Caco-2 (cell line): ENCODE measurements at regions of chr14 and their contacts with region 1.

Region 1: GRCh38 chr14:39491134-39491571 is 58.9 kb upstream of the FBXO33 start:
- DNase-seq: peak in 1 of 2 experiments; percentile 43
- H3K4me3 ChIP-seq: no peak overlapping the region
- H3K4me3 Mint-ChIP-seq: no peak overlapping the region
- H3K27ac Mint-ChIP-seq: peak overlapping the region; percentile 55
- H3K4me1 ChIP-seq: peaks cover 9% of the 10 kb centered on the region; the same call in 1 of the 2 replicates
- H3K4me1 Mint-ChIP-seq: peaks cover 11% of the 10 kb centered on the region
- H3K27me3 ChIP-seq: no peaks in the 10 kb centered on the region
- H3K27me3 Mint-ChIP-seq: no peaks in the 10 kb centered on the region
- CTCF ChIP-seq: peak; percentile 22 to 36

Region 2: GRCh38 chr14:39581474-39581873 is 90.3 kb after region 1 on chr14:
- CTCF ChIA-PET with region 1: no interaction called
- POLR2A ChIA-PET with region 1: no interaction called
- intact Hi-C with region 1: loop called (anchors 5 kb)
- DNase-seq: no peak
- H3K4me3 ChIP-seq: no peak overlapping the region
- H3K4me3 Mint-ChIP-seq: no peak overlapping the region
- H3K27ac Mint-ChIP-seq: no peak overlapping the region
- H3K4me1 ChIP-seq: no peaks in the 10 kb centered on the region
- H3K4me1 Mint-ChIP-seq: no peaks in the 10 kb centered on the region
- H3K27me3 ChIP-seq: no peaks in the 10 kb centered on the region
- H3K27me3 Mint-ChIP-seq: peaks cover 3% of the 10 kb centered on the region
- CTCF ChIP-seq: no peak

Region 3: DNA sequence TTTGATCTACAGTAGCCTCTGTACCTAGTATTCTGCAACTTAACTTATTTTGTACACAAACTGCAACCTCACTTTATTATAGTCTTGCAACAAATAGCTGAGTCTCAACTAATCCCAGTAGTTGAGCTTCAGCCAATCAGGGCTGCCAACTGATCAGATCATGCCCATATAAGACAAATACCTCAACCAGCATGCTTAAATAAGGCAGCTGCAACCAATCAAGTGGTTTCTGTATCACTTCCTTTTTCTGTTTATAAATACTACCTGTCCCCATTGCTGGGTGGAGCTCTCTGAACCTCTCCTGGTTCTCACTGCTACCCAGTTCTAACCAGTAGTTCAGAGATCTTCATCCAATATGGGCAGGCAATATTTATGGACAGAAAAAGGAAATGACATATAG is 189.6 kb after region 1 on chr14:
- CTCF ChIA-PET with region 1: no interaction called
- POLR2A ChIA-PET with region 1: no interaction called
- intact Hi-C with region 1: loop called (anchors 10 kb)
- DNase-seq: no peak
- H3K4me3 ChIP-seq: no peak overlapping the region
- H3K4me3 Mint-ChIP-seq: no peak overlapping the region
- H3K27ac Mint-ChIP-seq: no peak overlapping the region
- H3K4me1 ChIP-seq: no peaks in the 10 kb centered on the region
- H3K4me1 Mint-ChIP-seq: no peaks in the 10 kb centered on the region
- H3K27me3 ChIP-seq: no peaks in the 10 kb centered on the region
- H3K27me3 Mint-ChIP-seq: peaks cover 3% of the 10 kb centered on the region
- CTCF ChIP-seq: no peak